Dendritic cell treated with granulocyte-macrophage colony-stimulating factor and Interleukin-4, amounts not matched to agents 40 ng/mL and 50 ng/mL, for 4 days (primary cell): ENCODE measurements at regions of chr4 and their contacts with region 1.

Region 1: GRCh38 chr4:112296949-112297880 is at the start of gene ALPK1:
- H3K4me3 Mint-ChIP-seq: peak within 1 kb of the TSS; percentile 82
- H3K27ac Mint-ChIP-seq: peak within 1 kb of the TSS; percentile 89
- H3K4me1 Mint-ChIP-seq: peaks cover 14% of the 10 kb centered on the region
- H3K27me3 Mint-ChIP-seq: no peaks in the 10 kb centered on the region

Region 2: GRCh38 chr4:112321776-112322684 is 24.8 kb after region 1 on chr4:
- intact Hi-C with region 1: loop called (anchors 2 kb)
- H3K4me3 Mint-ChIP-seq: no peak overlapping the region
- H3K27ac Mint-ChIP-seq: no peak overlapping the region
- H3K4me1 Mint-ChIP-seq: peaks cover 28% of the 10 kb centered on the region
- H3K27me3 Mint-ChIP-seq: no peaks in the 10 kb centered on the region

Region 3: DNA sequence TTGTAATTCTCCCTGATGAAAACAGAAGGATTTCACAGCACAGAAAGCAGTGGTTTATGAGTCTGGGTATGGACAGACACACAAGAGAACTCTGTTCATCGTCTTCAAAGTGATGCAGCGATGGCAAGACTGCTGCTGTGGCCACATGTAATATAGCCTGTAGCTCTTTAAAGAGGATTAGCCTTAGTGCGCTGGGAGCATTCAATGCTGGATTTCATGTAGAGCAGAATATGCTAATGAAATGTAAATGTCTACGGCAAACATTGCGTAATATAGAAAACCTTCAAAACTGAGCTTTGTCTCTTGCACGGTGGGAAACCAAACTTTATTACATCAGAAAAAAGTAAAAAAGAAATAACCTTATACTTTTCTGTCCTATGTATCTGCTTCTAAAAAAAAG is 42.8 kb after region 1 on chr4:
- intact Hi-C with region 1: no loop called
- H3K4me3 Mint-ChIP-seq: no peak overlapping the region
- H3K27ac Mint-ChIP-seq: no peak overlapping the region
- H3K4me1 Mint-ChIP-seq: no peaks in the 10 kb centered on the region
- H3K27me3 Mint-ChIP-seq: no peaks in the 10 kb centered on the region